ENCODE measurements at regions of chr21 and their contacts with region 1.

Region 1: GRCh38 chr21:45596704-45597318 is 46.7 kb upstream of the PCBP3 start:
- DNase-seq: no peak
- H3K4me3 ChIP-seq: no peak overlapping the region
- CTCF ChIP-seq: peak; percentile 89

Region 2: GRCh38 chr21:45187646-45188045 is 409.2 kb before region 1 on chr21:
- CTCF ChIA-PET with region 1: no interaction called
- POLR2A ChIA-PET with region 1: no interaction called
- DNase-seq: no peak
- H3K4me3 ChIP-seq: no peak overlapping the region
- CTCF ChIP-seq: no peak

Region 3: GRCh38 chr21:45576838-45577737 is 19.7 kb before region 1 on chr21:
- CTCF ChIA-PET with region 1: interaction called, 18 read pairs
- POLR2A ChIA-PET with region 1: no interaction called
- DNase-seq: no peak
- H3K4me3 ChIP-seq: no peak overlapping the region
- CTCF ChIP-seq: no peak

Region 4: GRCh38 chr21:45583831-45584509 is 12.8 kb before region 1 on chr21:
- CTCF ChIA-PET with region 1: interaction called, 34 read pairs
- POLR2A ChIA-PET with region 1: no interaction called
- DNase-seq: no peak
- H3K4me3 ChIP-seq: no peak overlapping the region
- CTCF ChIP-seq: no peak

Region 5: GRCh38 chr21:45607021-45607908 is 10.5 kb after region 1 on chr21:
- CTCF ChIA-PET with region 1: interaction called, 11 read pairs
- POLR2A ChIA-PET with region 1: no interaction called
- DNase-seq: no peak
- H3K4me3 ChIP-seq: no peak overlapping the region
- CTCF ChIP-seq: no peak

Region 6: DNA sequence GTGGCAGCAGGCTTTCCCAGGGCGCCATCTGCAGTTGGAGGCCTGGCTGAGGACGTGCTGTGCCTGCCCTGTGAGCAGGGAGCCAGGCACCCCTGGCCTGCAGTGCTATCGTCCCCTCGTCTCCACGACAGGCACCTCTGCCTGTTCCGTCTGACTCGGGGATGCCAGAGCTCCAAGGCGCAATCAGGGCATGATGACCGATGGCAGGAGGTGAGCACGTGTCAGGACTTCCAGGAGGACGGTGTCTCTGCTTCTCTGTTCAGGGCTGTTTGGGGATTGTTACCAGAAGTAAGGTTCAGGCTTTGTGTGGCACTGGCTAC is 171.9 kb after region 1 on chr21:
- CTCF ChIA-PET with region 1: no interaction called
- POLR2A ChIA-PET with region 1: no interaction called
- DNase-seq: no peak
- H3K4me3 ChIP-seq: no peak overlapping the region; the same call in 1 of the 2 replicates
- CTCF ChIP-seq: peak; percentile 9